SK-N-SH (cell line): ENCODE measurements at regions of chr7 and their contacts with region 1.

Region 1: GRCh38 chr7:135645296-135645904 is 16.9 kb upstream of the STMP1 start:
- DNase-seq: peak; percentile 62
- H3K4me3 ChIP-seq: no peak overlapping the region
- H3K27ac ChIP-seq: peak overlapping the region in 1 of 2 experiments; percentile 24; a peak in 2 of 4 replicates
- H3K4me1 ChIP-seq: peaks cover 0 to 6% of the 10 kb centered on the region in 2 experiments; a peak in 2 of 4 replicates
- H3K27me3 ChIP-seq: no peaks in the 10 kb centered on the region
- CTCF ChIP-seq: peak; percentile 92
- EP300 ChIP-seq: no peak
- RAD21 ChIP-seq: peak; percentile 80

Region 2: DNA sequence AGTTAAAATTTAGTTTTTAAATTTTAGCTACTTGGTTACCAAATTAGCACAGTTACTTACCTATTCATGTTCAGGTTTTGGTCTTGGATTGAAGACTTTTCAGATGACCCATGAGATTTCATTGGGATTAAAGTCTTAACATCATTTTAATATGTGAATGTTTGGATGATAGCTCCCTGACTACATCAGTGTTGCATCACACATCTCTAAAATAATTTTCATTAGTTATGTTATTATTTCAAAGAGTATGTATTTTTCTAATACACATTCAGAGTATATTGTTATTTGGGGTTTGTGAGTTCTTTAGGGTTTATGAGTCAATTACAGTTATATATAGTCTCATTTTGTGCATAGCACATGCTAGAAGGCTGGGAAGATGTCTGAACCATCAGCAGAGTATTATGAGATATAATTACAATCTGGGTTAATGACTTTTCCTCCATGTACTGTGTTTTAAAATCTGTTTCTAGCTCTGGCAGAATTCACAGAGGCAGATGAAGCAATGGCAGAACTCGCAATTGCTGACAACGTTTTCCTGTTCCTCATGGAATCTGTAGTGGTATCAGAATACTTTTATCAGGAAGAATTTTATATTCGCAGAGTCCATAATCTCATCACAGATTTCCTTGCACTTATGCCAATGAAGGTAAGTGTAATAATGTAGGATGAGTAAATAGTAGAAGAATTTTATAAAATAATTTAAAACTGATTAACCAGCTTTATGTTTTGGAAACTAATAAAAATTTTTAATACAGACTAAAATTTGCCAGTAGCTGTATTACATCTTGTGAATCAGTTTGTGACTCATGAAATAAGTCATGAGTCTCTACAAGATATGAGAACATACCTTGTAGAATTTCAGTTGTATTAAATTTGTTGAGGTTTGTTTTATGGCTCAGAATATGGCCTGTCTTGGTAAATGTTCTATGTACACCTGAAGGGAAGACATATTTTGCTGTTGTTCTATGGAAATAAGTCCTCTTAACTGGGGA is 60.7 kb before region 1 on chr7:
- CTCF ChIA-PET with region 1: interaction called, 10 read pairs
- POLR2A ChIA-PET with region 1: no interaction called
- DNase-seq: no peak
- H3K4me3 ChIP-seq: no peak overlapping the region
- H3K27ac ChIP-seq: peak overlapping the region in 1 of 2 experiments; percentile 62; a peak in 2 of 4 replicates
- H3K4me1 ChIP-seq: peaks cover 0 to 5% of the 10 kb centered on the region in 2 experiments; a peak in 1 of 4 replicates
- H3K27me3 ChIP-seq: no peaks in the 10 kb centered on the region
- CTCF ChIP-seq: no peak
- EP300 ChIP-seq: no peak
- RAD21 ChIP-seq: no peak

Region 3: DNA sequence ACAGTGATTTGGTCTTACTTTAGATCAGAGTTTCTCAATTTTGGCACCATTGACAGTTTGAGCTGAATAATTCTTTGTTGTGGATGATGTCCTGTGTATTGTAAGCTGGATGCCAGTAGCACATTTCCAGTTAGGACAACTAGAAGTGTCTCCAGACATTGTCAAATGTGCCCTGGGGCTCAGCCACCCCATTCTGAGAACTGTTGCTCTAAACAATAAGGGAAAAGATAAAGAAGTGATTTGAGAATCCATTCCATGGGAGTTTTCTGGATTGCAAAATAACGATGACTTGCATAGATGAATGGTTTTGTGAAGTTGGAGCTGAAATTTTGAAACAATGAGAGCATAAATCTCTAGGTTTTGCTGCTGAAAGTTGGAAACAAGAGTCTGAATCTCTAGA is 43.1 kb before region 1 on chr7:
- CTCF ChIA-PET with region 1: interaction called, 11 read pairs
- POLR2A ChIA-PET with region 1: no interaction called
- DNase-seq: no peak
- H3K4me3 ChIP-seq: no peak overlapping the region
- H3K27ac ChIP-seq: peak overlapping the region in 1 of 2 experiments; percentile 96; a peak in 2 of 4 replicates
- H3K4me1 ChIP-seq: peaks cover 11 to 21% of the 10 kb centered on the region in 2 experiments
- H3K27me3 ChIP-seq: no peaks in the 10 kb centered on the region
- CTCF ChIP-seq: no peak
- EP300 ChIP-seq: no peak
- RAD21 ChIP-seq: no peak

Region 4: GRCh38 chr7:135616136-135616535 is 29.3 kb before region 1 on chr7:
- CTCF ChIA-PET with region 1: interaction called, 273 read pairs
- POLR2A ChIA-PET with region 1: no interaction called
- DNase-seq: no peak
- H3K4me3 ChIP-seq: no peak overlapping the region
- H3K27ac ChIP-seq: no peak overlapping the region; a peak in 1 of 4 replicates
- H3K4me1 ChIP-seq: peaks cover 0 to 11% of the 10 kb centered on the region in 2 experiments; a peak in 2 of 4 replicates
- H3K27me3 ChIP-seq: no peaks in the 10 kb centered on the region
- CTCF ChIP-seq: no peak
- EP300 ChIP-seq: no peak
- RAD21 ChIP-seq: no peak

Region 5: GRCh38 chr7:135620980-135621850 is 24.2 kb before region 1 on chr7:
- CTCF ChIA-PET with region 1: interaction called, 273 read pairs
- POLR2A ChIA-PET with region 1: no interaction called
- DNase-seq: peak; percentile 66
- H3K4me3 ChIP-seq: no peak overlapping the region
- H3K27ac ChIP-seq: peak overlapping the region; percentile 23 to 69; a peak in 3 of 4 replicates
- H3K4me1 ChIP-seq: peaks cover 0 to 9% of the 10 kb centered on the region in 2 experiments; a peak in 2 of 4 replicates
- H3K27me3 ChIP-seq: no peaks in the 10 kb centered on the region
- CTCF ChIP-seq: peak; percentile 99
- EP300 ChIP-seq: peak in 1 of 2 experiments; percentile 34; a peak in 1 of 4 replicates
- RAD21 ChIP-seq: peak; percentile 80

Region 6: DNA sequence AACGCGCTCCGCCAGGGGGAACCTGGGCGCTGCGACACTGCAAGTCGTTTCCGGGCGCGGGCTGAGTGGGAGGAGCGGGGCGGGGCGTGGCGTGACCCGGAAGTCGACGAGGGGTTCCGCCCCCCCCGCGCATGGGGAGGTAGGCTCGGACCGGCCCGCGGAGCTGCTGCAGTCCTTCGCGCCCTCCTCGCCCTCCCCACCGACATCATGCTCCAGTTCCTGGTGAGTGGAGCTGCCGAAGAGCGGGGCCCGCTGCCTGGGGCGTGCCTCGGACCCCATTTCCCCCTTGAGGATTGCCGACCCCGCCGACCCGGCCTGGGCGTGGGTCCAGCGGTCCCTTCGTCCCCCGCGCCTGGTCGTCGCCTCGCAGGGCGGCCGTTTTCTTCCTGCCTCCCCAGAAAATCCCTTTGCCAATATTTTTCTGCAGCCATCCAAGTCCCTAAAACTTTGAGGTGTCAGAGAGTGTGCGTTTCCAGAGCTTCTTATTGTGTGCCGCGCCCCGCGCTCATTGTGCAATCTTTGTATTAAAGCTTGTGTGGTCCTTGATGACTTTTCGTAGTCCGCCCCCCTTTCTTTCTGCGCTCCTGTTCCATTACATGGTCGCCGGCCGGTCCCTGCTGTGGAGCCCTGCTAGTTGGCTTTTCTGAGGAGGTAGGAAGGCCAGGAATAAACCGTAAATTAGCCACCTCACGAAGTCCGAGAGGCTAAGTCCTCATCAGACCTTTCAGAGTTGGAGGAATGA is 17.1 kb after region 1 on chr7 and contains the start of gene STMP1:
- CTCF ChIA-PET with region 1: interaction called, 154 read pairs
- POLR2A ChIA-PET with region 1: interaction called, 3 read pairs
- DNase-seq: peak; percentile 100
- H3K4me3 ChIP-seq: peak within 1 kb of the TSS; percentile 73 to 96
- H3K27ac ChIP-seq: peak within 1 kb of the TSS; percentile 92 to 97
- H3K4me1 ChIP-seq: peaks cover 10 to 11% of the 10 kb centered on the region in 2 experiments
- H3K27me3 ChIP-seq: no peaks in the 10 kb centered on the region
- CTCF ChIP-seq: no peak
- EP300 ChIP-seq: peak; percentile 20 to 40; a peak in 2 of 4 replicates
- RAD21 ChIP-seq: peak; percentile 62
- polyA plus RNA-seq, gene STMP1: 26.0 and 30.0 TPM in 2 replicates

Region 7: DNA sequence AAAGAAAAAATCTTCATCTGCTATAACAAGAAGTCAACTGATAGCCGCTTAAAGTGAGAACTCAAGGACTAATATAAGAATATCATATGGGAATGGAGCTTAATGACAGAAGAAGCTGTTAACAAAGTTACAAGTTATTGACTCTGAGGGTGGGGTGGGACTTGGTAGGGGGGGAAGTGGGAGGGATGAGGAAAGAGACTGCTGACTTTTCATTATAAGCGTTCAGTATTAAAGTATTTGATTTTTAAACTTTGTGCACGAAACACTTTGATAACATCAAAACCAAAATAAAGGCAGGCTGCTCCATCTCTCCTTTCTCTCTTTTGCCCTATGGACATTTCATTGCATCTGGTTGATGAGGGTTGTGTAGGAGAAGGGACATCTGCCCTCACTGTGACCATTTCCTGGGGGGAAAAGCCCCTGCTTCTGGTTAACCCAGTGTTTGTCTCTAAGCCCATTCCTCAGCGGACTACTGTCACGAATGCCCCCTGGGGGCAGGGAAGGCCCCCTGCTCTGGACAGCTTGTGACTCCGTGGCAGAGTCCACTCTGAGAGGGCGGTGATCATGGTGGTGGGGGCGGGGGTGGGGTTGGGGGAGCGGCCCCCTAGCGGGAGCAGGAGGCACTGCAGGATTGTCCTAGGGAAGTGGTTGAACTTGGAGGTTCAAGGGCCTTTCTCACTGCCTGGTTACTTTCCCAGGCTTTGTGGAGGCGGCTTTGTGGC is 65.2 kb after region 1 on chr7:
- CTCF ChIA-PET with region 1: interaction called, 11 read pairs
- POLR2A ChIA-PET with region 1: no interaction called
- DNase-seq: peak; percentile 83
- H3K4me3 ChIP-seq: no peak overlapping the region
- H3K27ac ChIP-seq: peak overlapping the region in 1 of 2 experiments; percentile 93; a peak in 1 of 4 replicates
- H3K4me1 ChIP-seq: peaks cover 25 to 41% of the 10 kb centered on the region in 2 experiments
- H3K27me3 ChIP-seq: no peaks in the 10 kb centered on the region
- CTCF ChIP-seq: peak; percentile 64
- EP300 ChIP-seq: no peak
- RAD21 ChIP-seq: no peak